ENCODE measurements at regions of chr6 and their contacts with region 1.

Region 1: GRCh38 chr6:105112577-105112976 is 67.2 kb downstream of the POPDC3 start:
- DNase-seq: no peak
- ATAC-seq: no peak

Region 2: GRCh38 chr6:105851113-105851580 is 738.6 kb after region 1 on chr6:
- intact Hi-C with region 1: loop called (anchors 10 kb)
- DNase-seq: no peak
- ATAC-seq: peak; percentile 92

Measured in sciatic nerve (tissue), 2 donors.